Activated naive CD4-positive, alpha-beta T cell treated with anti-CD3 and anti-CD28 coated beads for 36 hours (primary cell): ENCODE measurements at regions of chr13 and their contacts with region 1.

Region 1: DNA sequence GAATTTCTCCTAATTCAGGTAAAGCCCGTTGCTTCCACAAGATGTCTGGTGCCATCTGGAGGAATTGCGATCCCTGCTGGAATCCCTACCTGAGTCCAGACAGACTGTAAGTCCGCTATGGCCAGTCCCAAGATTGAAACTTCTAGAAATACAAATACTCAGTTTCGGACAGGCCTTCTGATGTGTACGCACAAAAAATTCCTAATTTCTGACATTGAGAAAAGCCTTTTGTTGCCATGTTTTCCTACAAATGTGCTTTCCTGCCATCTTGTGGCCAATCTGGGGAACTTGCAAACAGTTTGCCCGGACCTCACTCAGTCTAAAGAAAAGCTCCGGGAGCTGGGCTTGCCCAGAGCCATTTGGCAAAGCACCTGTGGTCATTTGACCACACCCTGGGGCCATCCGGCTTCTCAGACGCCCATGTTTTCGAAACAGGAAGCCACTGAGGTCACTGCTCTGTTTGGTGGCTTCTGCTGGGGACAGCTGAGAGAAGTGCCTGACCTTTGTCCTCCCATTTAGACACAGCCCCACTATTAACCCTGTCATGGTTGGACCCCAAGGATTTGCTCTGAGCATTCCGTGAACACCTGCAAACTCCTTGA is 79.4 kb downstream of the SLC15A1 start:
- DNase-seq: peak; percentile 66
- H3K4me3 Mint-ChIP-seq: no peak overlapping the region
- H3K27ac Mint-ChIP-seq: no peak overlapping the region
- H3K4me1 Mint-ChIP-seq: no peaks in the 10 kb centered on the region
- H3K27me3 Mint-ChIP-seq: no peaks in the 10 kb centered on the region

Region 2: DNA sequence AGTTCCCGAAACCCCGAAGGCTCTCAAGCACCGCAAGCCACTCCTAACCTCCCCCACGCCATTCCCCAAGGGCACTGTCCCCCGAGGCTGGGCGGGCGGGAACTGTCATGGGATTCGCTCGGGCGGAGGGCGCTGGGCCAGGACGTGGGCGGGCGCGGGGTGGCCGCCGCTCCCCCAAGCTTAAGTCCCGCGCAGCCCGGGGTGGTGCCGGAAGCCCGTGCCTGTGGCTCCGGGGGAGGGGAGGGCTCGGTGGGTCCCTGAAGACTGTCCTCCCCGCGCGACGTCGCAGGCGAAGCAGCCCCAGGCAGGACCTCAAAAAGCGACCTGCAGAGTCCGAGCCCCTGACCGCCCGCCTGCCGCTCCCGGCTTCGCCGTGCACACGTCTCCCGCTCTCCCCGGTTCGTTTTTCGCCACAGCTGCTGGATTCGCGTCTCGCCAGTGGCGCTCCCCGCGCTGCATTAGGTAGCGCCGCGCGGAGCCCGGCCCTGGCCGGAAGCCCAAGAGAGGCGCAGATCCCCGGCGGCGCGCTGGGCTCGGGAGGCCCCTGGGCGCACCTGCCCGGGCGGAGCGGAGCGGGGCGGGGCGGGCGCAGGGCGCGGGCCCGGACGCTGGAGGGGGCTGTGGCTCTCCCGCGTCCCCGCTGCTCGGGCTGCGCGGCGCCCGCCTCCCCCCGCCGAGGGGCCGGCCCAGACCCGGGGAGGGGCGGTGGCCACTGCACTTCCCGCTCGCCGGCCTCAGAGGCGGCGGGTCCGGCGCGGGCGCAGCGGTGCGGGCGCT is 530.5 kb before region 1 on chr13 and contains the start of gene FARP1:
- CTCF ChIA-PET with region 1: no interaction called
- intact Hi-C with region 1: loop called (anchors 5 kb)
- DNase-seq: peak; percentile 62
- H3K4me3 Mint-ChIP-seq: peak within 1 kb of the TSS; percentile 73
- H3K27ac Mint-ChIP-seq: no peak within 1 kb of the TSS
- H3K4me1 Mint-ChIP-seq: peaks cover 9% of the 10 kb centered on the region
- H3K27me3 Mint-ChIP-seq: peaks cover 52% of the 10 kb centered on the region
- total RNA-seq, gene FARP1: 0.27 to 0.38 TPM

Region 3: DNA sequence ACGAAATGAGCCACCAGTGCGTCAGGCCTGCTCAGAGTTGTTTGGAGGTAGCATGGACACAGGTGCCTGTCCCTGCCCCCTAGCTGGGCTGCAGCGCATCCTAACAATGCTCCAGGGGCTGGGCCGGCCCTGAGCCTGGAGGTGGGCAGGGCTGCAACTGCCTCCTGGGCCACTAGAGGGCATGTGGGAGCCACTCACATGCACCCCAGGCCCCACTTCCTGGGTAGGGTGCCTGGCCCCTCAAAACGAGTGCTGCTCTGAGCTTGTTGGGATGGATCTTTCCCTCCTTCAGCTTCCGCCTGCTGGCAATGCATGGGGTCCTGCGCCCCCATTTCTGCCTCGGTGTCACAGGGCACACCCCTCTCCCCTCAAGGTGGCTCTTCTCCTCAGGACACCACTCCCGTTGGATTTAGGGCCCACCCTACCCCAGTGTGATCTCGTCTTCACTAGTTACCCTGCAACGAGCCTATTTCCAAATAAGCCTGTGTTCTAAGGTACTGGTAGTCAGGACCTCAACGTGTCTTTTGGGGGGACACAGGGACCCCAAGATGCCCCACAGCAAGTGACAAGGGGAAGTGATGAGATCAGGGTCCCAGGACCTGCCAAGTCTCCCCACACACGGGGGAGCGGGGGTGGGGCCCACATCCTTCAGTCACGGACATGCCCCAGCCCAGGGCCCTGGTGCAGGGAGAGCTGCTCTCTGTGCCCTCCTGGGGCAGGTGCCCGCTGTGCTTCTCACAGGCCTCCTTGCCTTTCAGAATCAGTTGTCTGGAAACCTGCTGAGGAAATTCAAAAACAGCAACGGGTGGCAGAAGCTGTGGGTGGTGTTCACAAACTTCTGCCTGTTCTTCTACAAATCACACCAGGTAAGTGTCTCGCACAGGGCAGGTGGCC is 227.5 kb before region 1 on chr13:
- CTCF ChIA-PET with region 1: interaction called, 67 read pairs
- intact Hi-C with region 1: loop called (anchors 1 kb)
- DNase-seq: peak; percentile 85
- H3K4me3 Mint-ChIP-seq: no peak overlapping the region
- H3K27ac Mint-ChIP-seq: peak overlapping the region; percentile 88
- H3K4me1 Mint-ChIP-seq: peaks cover 17% of the 10 kb centered on the region
- H3K27me3 Mint-ChIP-seq: no peaks in the 10 kb centered on the region

Region 4: DNA sequence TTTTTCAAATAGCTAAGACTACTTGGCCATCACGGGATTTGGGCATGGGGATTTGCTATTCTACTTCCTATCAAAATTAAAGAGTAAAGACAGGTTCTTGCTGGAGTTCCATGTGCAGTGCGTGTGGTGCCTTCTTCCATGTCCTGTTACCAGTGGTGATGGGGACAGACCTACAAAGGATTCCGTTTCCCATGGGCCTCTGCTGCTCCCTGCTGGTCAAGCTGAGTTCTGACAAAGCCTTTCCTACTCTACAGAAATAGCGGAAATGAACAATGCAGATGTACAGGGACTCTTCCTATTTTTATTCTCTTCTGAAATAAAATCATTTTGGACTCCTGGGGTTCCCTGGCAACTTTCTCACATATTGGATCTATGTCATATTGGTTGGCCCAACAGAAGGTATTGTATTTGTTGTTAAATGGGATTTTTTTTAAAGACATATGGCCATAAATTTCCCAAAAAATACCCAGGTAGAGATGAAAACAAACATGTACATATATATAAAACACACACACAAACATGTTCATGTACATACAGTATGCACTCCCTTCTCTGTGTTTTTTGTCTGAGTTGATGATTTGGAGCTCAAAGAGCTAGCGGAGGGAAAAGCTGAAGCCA is 169.9 kb after region 1 on chr13:
- CTCF ChIA-PET with region 1: no interaction called
- intact Hi-C with region 1: loop called (anchors 2 kb)
- DNase-seq: peak; percentile 85
- H3K4me3 Mint-ChIP-seq: no peak overlapping the region
- H3K27ac Mint-ChIP-seq: no peak overlapping the region
- H3K4me1 Mint-ChIP-seq: peaks cover 6% of the 10 kb centered on the region
- H3K27me3 Mint-ChIP-seq: no peaks in the 10 kb centered on the region